HAP-1 (cell line): ENCODE measurements at regions of chr3 and their contacts with region 1.

Region 1: GRCh38 chr3:136042608-136043221 is 77.2 kb downstream of the PPP2R3A start:
- DNase-seq: peak; percentile 15 to 56
- H3K4me3 ChIP-seq: no peak overlapping the region
- H3K4me1 ChIP-seq: no peaks in the 10 kb centered on the region
- H3K27me3 ChIP-seq: no peaks in the 10 kb centered on the region

Region 2: GRCh38 chr3:135736740-135737139 is 306.0 kb before region 1 on chr3:
- in situ Hi-C with region 1: loop called (anchors 10 kb)
- DNase-seq: peak in 1 of 2 experiments; percentile 63
- H3K4me3 ChIP-seq: no peak overlapping the region
- H3K4me1 ChIP-seq: no peaks in the 10 kb centered on the region
- H3K27me3 ChIP-seq: no peaks in the 10 kb centered on the region

Region 3: GRCh38 chr3:135918580-135918962 is 124.1 kb before region 1 on chr3:
- in situ Hi-C with region 1: loop called (anchors 5 kb)
- DNase-seq: peak in 1 of 2 experiments; percentile 29
- H3K4me3 ChIP-seq: no peak overlapping the region
- H3K4me1 ChIP-seq: no peaks in the 10 kb centered on the region
- H3K27me3 ChIP-seq: peaks cover 2% of the 10 kb centered on the region; the same call in 1 of the 2 replicates

Region 4: GRCh38 chr3:136645915-136646314 is 603.2 kb after region 1 on chr3:
- in situ Hi-C with region 1: no loop called
- DNase-seq: no peak
- H3K4me3 ChIP-seq: no peak overlapping the region
- H3K4me1 ChIP-seq: peaks cover 6% of the 10 kb centered on the region
- H3K27me3 ChIP-seq: no peaks in the 10 kb centered on the region